ENCODE measurements at regions of chr12 and their contacts with region 1.

Region 1: DNA sequence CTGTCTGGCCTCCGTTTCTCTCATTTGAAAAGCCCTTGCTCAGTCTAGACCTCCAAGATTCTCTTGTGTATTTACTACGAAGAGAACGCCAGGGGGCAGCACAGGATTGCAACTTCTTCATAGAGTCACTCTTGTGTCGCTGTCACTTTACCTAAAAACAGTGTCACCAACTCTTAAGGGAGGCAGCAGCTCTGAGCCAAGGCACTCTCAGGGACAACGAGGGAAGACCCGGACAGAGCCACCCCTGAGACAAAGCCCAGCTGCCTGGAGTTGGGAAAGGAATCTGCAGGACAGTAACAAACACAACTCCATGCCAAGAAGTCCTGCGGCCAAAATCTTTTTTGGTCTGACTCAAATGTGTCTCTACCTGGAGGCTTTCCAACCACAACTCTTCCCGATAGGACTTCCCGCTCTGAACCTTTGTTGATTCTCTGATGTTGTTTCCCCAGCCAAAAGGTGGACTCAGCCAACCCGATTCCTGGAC is 9.6 kb upstream of the RPAP3 start:
- DNase-seq: peak; percentile 88
- H3K4me3 Mint-ChIP-seq: no peak overlapping the region
- H3K27ac Mint-ChIP-seq: no peak overlapping the region
- H3K4me1 Mint-ChIP-seq: peaks cover 26% of the 10 kb centered on the region
- H3K27me3 Mint-ChIP-seq: peaks cover 12% of the 10 kb centered on the region

Region 2: DNA sequence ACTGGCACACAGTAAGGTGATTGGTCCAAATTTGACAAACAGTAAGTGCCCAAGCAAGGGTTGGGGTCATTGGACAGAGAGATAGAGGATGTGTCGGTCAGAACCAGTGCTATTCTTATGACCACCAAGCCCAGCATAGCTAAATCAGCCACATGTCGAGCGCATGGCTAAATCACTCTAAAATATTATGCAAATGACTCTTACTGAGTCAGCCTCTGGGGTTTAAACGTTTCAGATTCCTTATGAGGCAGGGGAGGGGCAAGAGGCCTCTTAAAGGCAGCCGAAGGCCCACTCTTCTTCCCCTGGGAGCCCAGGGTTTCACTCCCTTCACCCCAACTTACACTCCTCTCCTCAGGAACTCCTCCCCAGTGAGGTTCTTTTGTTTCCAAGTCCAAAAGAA is 10.5 kb after region 1 on chr12:
- CTCF ChIA-PET with region 1: interaction called, 40 read pairs
- DNase-seq: no peak
- H3K4me3 Mint-ChIP-seq: no peak overlapping the region
- H3K27ac Mint-ChIP-seq: no peak overlapping the region
- H3K4me1 Mint-ChIP-seq: peaks cover 16% of the 10 kb centered on the region
- H3K27me3 Mint-ChIP-seq: peaks cover 6% of the 10 kb centered on the region

Region 3: GRCh38 chr12:47734725-47735480 is 19.5 kb after region 1 on chr12:
- CTCF ChIA-PET with region 1: interaction called, 107 read pairs
- DNase-seq: no peak
- H3K4me3 Mint-ChIP-seq: no peak overlapping the region
- H3K27ac Mint-ChIP-seq: no peak overlapping the region
- H3K4me1 Mint-ChIP-seq: no peaks in the 10 kb centered on the region
- H3K27me3 Mint-ChIP-seq: peaks cover 23% of the 10 kb centered on the region

Region 4: GRCh38 chr12:47758834-47759690 is 43.6 kb after region 1 on chr12 and contains the start of gene RAPGEF3:
- CTCF ChIA-PET with region 1: interaction called, 24 read pairs
- DNase-seq: peak; percentile 82
- H3K4me3 Mint-ChIP-seq: peak within 1 kb of the TSS; percentile 69
- H3K27ac Mint-ChIP-seq: no peak within 1 kb of the TSS
- H3K4me1 Mint-ChIP-seq: peaks cover 22% of the 10 kb centered on the region
- H3K27me3 Mint-ChIP-seq: peaks cover 74% of the 10 kb centered on the region

Region 5: GRCh38 chr12:47773062-47773857 is 57.8 kb after region 1 on chr12 and contains the start of gene SLC48A1:
- CTCF ChIA-PET with region 1: interaction called, 108 read pairs
- DNase-seq: peak; percentile 78
- H3K4me3 Mint-ChIP-seq: peak within 1 kb of the TSS; percentile 91
- H3K27ac Mint-ChIP-seq: peak within 1 kb of the TSS; percentile 88
- H3K4me1 Mint-ChIP-seq: peaks cover 46% of the 10 kb centered on the region
- H3K27me3 Mint-ChIP-seq: peaks cover 5% of the 10 kb centered on the region

Region 6: GRCh38 chr12:47779301-47779942 is 64.0 kb after region 1 on chr12:
- CTCF ChIA-PET with region 1: interaction called, 24 read pairs
- DNase-seq: peak; percentile 95
- H3K4me3 Mint-ChIP-seq: no peak overlapping the region
- H3K27ac Mint-ChIP-seq: peak overlapping the region; percentile 77
- H3K4me1 Mint-ChIP-seq: peaks cover 53% of the 10 kb centered on the region
- H3K27me3 Mint-ChIP-seq: no peaks in the 10 kb centered on the region

Measured in activated naive CD4-positive, alpha-beta T cell treated with anti-CD3 and anti-CD28 coated beads, Interleukin-2, amount 10 ng/mL, durations not matched to agents 7 days and 5 days (primary cell).